ENCODE measurements at regions of chr17 and their contacts with region 1.

Region 1: DNA sequence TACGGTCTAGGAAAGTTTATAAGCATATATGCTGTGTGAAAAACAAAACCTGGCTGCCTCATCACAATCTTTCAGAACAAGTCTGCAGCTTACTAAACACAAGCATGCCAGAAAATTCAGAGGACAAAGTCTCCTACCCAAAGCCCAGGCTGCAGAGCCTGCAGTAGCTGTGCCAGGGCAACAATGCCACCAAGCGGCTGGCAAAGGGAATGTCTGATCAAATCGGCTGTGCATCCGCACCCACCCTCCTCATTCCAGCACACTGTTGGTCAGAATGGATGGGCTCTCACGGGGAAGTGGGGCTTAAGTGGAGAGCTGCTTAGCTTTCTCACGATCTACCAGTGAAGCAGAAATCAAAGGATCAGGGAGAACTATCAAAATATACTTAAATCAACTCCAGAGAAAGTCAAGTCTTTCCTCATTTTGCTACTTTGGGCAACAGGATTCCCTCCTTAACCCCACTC is 73.5 kb downstream of the CYTH1 start:
- DNase-seq: peak; percentile 65
- ATAC-seq: peak; percentile 78
- H3K4me3 Mint-ChIP-seq: peak overlapping the region; percentile 26
- H3K27ac Mint-ChIP-seq: peak overlapping the region; percentile 87
- H3K4me1 Mint-ChIP-seq: peaks cover 67% of the 10 kb centered on the region
- H3K27me3 Mint-ChIP-seq: no peaks in the 10 kb centered on the region
- CTCF ChIP-seq: peak; percentile 87

Region 2: DNA sequence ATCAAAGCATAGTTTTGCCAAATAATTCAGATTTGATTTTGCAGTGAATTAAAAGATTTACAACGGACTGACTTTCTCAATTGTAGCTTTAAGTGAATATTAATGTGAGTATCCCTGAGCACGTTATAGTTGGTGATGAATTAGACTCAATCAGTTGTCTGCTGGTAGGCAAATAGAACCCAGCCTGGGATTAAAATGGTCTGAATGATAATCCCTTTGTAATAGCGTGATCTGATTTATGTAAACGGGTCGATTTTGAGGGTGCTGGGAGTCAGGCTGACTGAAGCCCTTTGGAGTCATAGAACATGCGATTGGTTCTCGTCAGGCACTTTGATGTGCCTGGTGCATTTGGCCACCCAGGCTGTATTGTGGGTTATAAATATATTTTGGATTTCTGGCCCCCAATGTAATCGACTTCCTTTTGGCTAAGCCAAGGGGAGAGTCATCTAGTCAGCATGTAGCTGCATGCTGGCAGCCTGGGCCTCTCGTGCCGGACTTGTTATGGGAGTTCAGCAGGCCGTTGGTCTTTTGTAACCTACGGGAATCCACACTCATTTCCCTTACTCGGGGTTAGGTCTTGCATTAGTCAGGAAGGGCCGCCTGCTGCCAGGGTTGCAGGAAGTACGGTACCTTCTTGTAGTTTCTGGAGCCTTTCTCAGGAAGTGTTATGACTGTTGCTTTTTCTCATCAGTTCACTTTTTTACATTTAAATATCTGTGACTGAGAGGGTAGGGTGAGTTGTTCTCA is 324.6 kb before region 1 on chr17:
- CTCF ChIA-PET with region 1: no interaction called
- POLR2A ChIA-PET with region 1: no interaction called
- intact Hi-C with region 1: no loop called
- DNase-seq: peak; percentile 78
- ATAC-seq: peak; percentile 38
- H3K4me3 Mint-ChIP-seq: peak overlapping the region; percentile 60
- H3K27ac Mint-ChIP-seq: peak overlapping the region; percentile 99
- H3K4me1 Mint-ChIP-seq: peaks cover 86% of the 10 kb centered on the region
- H3K27me3 Mint-ChIP-seq: no peaks in the 10 kb centered on the region
- CTCF ChIP-seq: no peak

Region 3: DNA sequence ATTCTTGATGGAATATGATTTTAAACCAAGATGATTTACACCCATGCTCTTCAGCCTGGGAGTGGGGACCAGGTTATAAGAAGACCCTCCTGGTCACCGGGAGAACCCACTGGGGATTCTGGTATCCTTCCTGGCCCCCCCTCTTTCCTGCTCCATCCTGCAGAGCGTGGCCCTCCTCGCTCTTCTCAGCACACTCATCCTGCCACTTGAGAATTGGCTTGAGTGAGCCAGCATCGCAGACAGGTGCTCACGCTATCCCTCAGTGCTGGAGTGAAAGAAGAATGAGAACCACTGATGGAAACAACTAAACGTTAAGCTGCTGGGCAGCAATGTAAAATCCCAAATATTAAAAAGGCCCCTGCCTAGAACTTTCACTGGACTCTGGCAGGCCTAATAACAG is 24.5 kb before region 1 on chr17:
- CTCF ChIA-PET with region 1: interaction called, 10 read pairs
- POLR2A ChIA-PET with region 1: no interaction called
- intact Hi-C with region 1: no loop called
- DNase-seq: no peak
- ATAC-seq: no peak
- H3K4me3 Mint-ChIP-seq: no peak overlapping the region
- H3K27ac Mint-ChIP-seq: no peak overlapping the region
- H3K4me1 Mint-ChIP-seq: no peaks in the 10 kb centered on the region
- H3K27me3 Mint-ChIP-seq: no peaks in the 10 kb centered on the region
- CTCF ChIP-seq: no peak

Region 4: GRCh38 chr17:78723001-78723796 is 14.7 kb after region 1 on chr17:
- CTCF ChIA-PET with region 1: interaction called, 24 read pairs
- POLR2A ChIA-PET with region 1: interaction called, 13 read pairs
- intact Hi-C with region 1: no loop called
- DNase-seq: no peak
- ATAC-seq: no peak
- H3K4me3 Mint-ChIP-seq: no peak overlapping the region
- H3K27ac Mint-ChIP-seq: peak overlapping the region; percentile 82
- H3K4me1 Mint-ChIP-seq: peaks cover 95% of the 10 kb centered on the region
- H3K27me3 Mint-ChIP-seq: no peaks in the 10 kb centered on the region
- CTCF ChIP-seq: no peak

Region 5: DNA sequence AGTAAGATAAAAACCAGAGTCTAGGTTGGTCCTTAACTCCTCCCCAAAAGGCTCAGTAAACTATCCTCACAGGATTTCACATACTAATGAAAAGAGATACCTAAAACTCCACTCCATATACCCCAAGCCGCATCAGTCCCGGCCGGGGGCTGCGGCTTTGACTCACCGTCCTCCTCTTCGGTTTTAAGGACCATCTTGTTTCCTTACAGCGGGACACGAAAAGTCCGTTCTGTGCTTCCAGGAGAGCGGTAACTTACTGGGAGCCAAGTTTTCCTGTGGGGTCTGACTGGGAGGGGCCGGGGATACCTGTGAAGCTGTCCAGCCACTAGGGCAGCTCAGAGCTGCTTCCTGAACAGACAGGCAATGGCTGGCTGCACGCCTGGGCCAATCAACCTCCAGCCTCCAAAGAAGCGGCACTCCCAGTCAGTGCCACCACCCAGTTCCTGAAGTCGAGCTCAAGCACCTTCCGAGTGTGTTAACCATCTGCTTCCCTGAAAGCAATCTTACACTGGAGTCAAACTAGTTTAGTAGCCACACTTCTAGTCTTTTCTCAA is 28.1 kb after region 1 on chr17:
- CTCF ChIA-PET with region 1: interaction called, 55 read pairs
- POLR2A ChIA-PET with region 1: interaction called, 6 read pairs
- intact Hi-C with region 1: no loop called
- DNase-seq: peak; percentile 74
- ATAC-seq: peak; percentile 71
- H3K4me3 Mint-ChIP-seq: peak overlapping the region; percentile 95
- H3K27ac Mint-ChIP-seq: peak overlapping the region; percentile 99
- H3K4me1 Mint-ChIP-seq: peaks cover 92% of the 10 kb centered on the region
- H3K27me3 Mint-ChIP-seq: no peaks in the 10 kb centered on the region
- CTCF ChIP-seq: no peak

Region 6: GRCh38 chr17:78806451-78806850 is 97.9 kb after region 1 on chr17:
- CTCF ChIA-PET with region 1: interaction called, 16 read pairs
- POLR2A ChIA-PET with region 1: no interaction called
- intact Hi-C with region 1: no loop called
- DNase-seq: peak; percentile 71
- ATAC-seq: peak; percentile 55
- H3K4me3 Mint-ChIP-seq: no peak overlapping the region
- H3K27ac Mint-ChIP-seq: peak overlapping the region; percentile 86
- H3K4me1 Mint-ChIP-seq: peaks cover 41% of the 10 kb centered on the region
- H3K27me3 Mint-ChIP-seq: no peaks in the 10 kb centered on the region
- CTCF ChIP-seq: no peak

Measured in activated CD8-positive, alpha-beta T cell treated with anti-CD3 and anti-CD28 coated beads for 36 hours (primary cell).